B cell (primary cell): ENCODE measurements at regions of chr19 and their contacts with region 1.

Region 1: DNA sequence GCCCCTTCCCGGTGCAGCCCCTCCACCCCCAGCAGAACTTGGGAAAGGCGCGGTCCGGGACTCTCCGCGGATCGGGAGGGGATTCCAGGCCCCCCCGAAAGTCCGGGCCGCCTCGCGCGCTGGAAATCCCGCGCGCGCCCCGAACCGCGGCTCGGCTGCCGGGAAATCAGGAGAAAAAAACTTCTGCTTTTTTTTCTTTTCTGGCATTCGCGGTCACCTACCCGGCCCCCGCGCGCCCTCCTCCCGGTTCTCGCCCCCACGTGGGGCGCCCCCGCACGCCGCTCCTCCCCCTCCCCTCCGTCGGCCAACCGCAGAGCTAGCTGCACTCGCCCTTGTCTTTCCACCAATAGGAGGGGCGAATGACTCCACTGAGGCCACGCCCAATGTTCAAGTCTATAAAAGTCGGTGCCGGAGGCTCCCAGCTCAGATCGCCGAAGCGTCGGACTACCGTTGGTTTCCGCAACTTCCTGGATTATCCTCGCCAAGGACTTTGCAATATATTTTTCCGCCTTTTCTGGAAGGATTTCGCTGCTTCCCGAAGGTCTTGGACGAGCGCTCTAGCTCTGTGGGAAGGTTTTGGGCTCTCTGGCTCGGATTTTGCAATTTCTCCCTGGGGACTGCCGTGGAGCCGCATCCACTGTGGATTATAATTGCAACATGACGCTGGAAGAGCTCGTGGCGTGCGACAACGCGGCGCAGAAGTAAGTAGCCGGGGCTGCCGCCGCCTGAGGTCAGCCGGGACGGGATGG is at the start of gene GADD45B:
- DNase-seq: peak; percentile 99
- ATAC-seq: peak; percentile 71
- H3K4me3 ChIP-seq: peak within 1 kb of the TSS; percentile 94 to 100 (median 100)
- H3K4me3 Mint-ChIP-seq: peak within 1 kb of the TSS; percentile 93
- H3K27ac ChIP-seq: peak within 1 kb of the TSS; percentile 72 to 74
- H3K27ac Mint-ChIP-seq: peak within 1 kb of the TSS; percentile 93
- H3K4me1 ChIP-seq: peaks cover 30 to 47% of the 10 kb centered on the region in 2 donors
- H3K4me1 Mint-ChIP-seq: peaks cover 34% of the 10 kb centered on the region
- H3K27me3 ChIP-seq: no peaks in the 10 kb centered on the region
- H3K27me3 Mint-ChIP-seq: no peaks in the 10 kb centered on the region
- CTCF ChIP-seq: no peak
- total RNA-seq, gene GADD45B: 166 and 167 TPM in 2 replicates

Region 2: GRCh38 chr19:2151339-2152229 is 324.3 kb before region 1 on chr19 and contains the start of gene AP3D1:
- CTCF ChIA-PET with region 1: interaction called, 3 read pairs
- POLR2A ChIA-PET with region 1: no interaction called
- intact Hi-C with region 1: loop called (anchors 10 kb)
- DNase-seq: peak; percentile 100
- ATAC-seq: peak; percentile 91
- H3K4me3 ChIP-seq: peak within 1 kb of the TSS; percentile 64 to 95 (median 82)
- H3K4me3 Mint-ChIP-seq: peak within 1 kb of the TSS; percentile 83
- H3K27ac ChIP-seq: peak within 1 kb of the TSS; percentile 18 to 90
- H3K27ac Mint-ChIP-seq: peak within 1 kb of the TSS; percentile 90
- H3K4me1 ChIP-seq: peaks cover 18 to 36% of the 10 kb centered on the region in 2 donors
- H3K4me1 Mint-ChIP-seq: peaks cover 37% of the 10 kb centered on the region
- H3K27me3 ChIP-seq: no peaks in the 10 kb centered on the region
- H3K27me3 Mint-ChIP-seq: no peaks in the 10 kb centered on the region
- CTCF ChIP-seq: no peak
- total RNA-seq, gene AP3D1: 96.4 and 108 TPM in 2 replicates

Region 3: DNA sequence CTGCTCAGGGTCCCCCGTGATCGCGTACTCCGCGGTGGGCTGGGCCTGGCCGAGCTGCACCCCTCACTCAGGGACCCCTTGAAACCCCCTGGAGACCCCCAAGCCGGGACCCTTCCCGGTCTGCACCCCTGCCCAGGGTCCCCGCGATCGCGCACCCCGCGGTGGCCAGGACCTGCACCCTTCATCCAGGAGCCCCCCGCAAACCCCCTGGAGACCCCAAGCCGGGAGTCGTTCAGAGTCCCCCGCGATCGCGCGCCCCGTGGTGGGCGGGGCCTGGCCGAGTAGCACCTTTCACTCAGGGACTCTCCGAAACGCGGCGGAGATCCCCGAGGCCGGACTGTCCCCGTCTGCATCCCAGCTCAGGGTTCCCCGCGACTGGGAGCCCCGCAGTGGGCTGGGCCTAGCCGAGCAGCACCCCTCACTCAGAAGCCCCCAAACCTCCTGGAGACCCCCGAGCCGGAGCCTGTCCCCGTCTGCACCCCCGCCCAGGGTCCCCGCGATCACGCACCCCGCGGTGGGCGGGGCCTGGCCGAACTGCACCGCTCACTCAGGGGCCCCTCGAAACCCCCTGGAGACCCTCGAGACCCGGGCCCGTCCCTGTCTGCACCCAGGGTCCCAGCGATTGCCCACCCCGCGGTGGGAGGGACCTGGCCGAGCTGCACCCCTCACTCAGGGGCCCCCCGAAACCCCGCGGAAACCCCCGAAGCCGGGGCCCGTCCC is 19.9 kb before region 1 on chr19:
- CTCF ChIA-PET with region 1: interaction called, 4 read pairs
- POLR2A ChIA-PET with region 1: interaction called, 12 read pairs
- intact Hi-C with region 1: no loop called
- DNase-seq: peak; percentile 73
- ATAC-seq: peak; percentile 34
- H3K4me3 ChIP-seq: peak overlapping the region; percentile 48 to 81 (median 76)
- H3K4me3 Mint-ChIP-seq: peak overlapping the region; percentile 84
- H3K27ac ChIP-seq: peak overlapping the region in 1 of 2 donors; percentile 73
- H3K27ac Mint-ChIP-seq: peak overlapping the region; percentile 63
- H3K4me1 ChIP-seq: peaks cover 7 to 26% of the 10 kb centered on the region in 2 donors
- H3K4me1 Mint-ChIP-seq: peaks cover 24% of the 10 kb centered on the region
- H3K27me3 ChIP-seq: no peaks in the 10 kb centered on the region
- H3K27me3 Mint-ChIP-seq: peaks cover under 1% of the 10 kb centered on the region
- CTCF ChIP-seq: no peak

Region 4: GRCh38 chr19:2543463-2544442 is 67.9 kb after region 1 on chr19:
- CTCF ChIA-PET with region 1: interaction called, 18 read pairs
- POLR2A ChIA-PET with region 1: interaction called, 18 read pairs
- intact Hi-C with region 1: no loop called
- DNase-seq: peak; percentile 50
- ATAC-seq: peak; percentile 74
- H3K4me3 ChIP-seq: peak overlapping the region in 2 of 5 experiments; percentile 7 to 8
- H3K4me3 Mint-ChIP-seq: peak overlapping the region; percentile 65
- H3K27ac ChIP-seq: no peak overlapping the region
- H3K27ac Mint-ChIP-seq: peak overlapping the region; percentile 57
- H3K4me1 ChIP-seq: peaks cover 19 to 24% of the 10 kb centered on the region in 2 donors
- H3K4me1 Mint-ChIP-seq: peaks cover 32% of the 10 kb centered on the region
- H3K27me3 ChIP-seq: no peaks in the 10 kb centered on the region
- H3K27me3 Mint-ChIP-seq: no peaks in the 10 kb centered on the region
- CTCF ChIP-seq: no peak

Region 5: GRCh38 chr19:2578901-2579677 is 103.2 kb after region 1 on chr19:
- CTCF ChIA-PET with region 1: interaction called, 25 read pairs
- POLR2A ChIA-PET with region 1: no interaction called
- intact Hi-C with region 1: no loop called
- DNase-seq: peak; percentile 39
- ATAC-seq: no peak
- H3K4me3 ChIP-seq: no peak overlapping the region
- H3K4me3 Mint-ChIP-seq: peak overlapping the region; percentile 13
- H3K27ac ChIP-seq: no peak overlapping the region
- H3K27ac Mint-ChIP-seq: no peak overlapping the region
- H3K4me1 ChIP-seq: peaks cover 13 to 15% of the 10 kb centered on the region in 2 donors
- H3K4me1 Mint-ChIP-seq: peaks cover 19% of the 10 kb centered on the region
- H3K27me3 ChIP-seq: no peaks in the 10 kb centered on the region
- H3K27me3 Mint-ChIP-seq: no peaks in the 10 kb centered on the region
- CTCF ChIP-seq: peak; percentile 29

Region 6: GRCh38 chr19:2618611-2619010 is 142.7 kb after region 1 on chr19:
- CTCF ChIA-PET with region 1: interaction called, 134 read pairs
- POLR2A ChIA-PET with region 1: interaction called, 77 read pairs
- intact Hi-C with region 1: no loop called
- DNase-seq: peak; percentile 83
- ATAC-seq: peak; percentile 29
- H3K4me3 ChIP-seq: peak overlapping the region in 3 of 5 experiments; percentile 25 to 47 (median 29)
- H3K4me3 Mint-ChIP-seq: peak overlapping the region; percentile 79
- H3K27ac ChIP-seq: peak overlapping the region; percentile 78 to 79
- H3K27ac Mint-ChIP-seq: peak overlapping the region; percentile 95
- H3K4me1 ChIP-seq: peaks cover 83 to 93% of the 10 kb centered on the region in 2 donors
- H3K4me1 Mint-ChIP-seq: peaks cover 82% of the 10 kb centered on the region
- H3K27me3 ChIP-seq: no peaks in the 10 kb centered on the region
- H3K27me3 Mint-ChIP-seq: no peaks in the 10 kb centered on the region
- CTCF ChIP-seq: no peak

Region 7: GRCh38 chr19:2648528-2648937 is 172.7 kb after region 1 on chr19:
- CTCF ChIA-PET with region 1: interaction called, 13 read pairs
- POLR2A ChIA-PET with region 1: interaction called, 6 read pairs
- intact Hi-C with region 1: no loop called
- DNase-seq: peak; percentile 87
- ATAC-seq: peak; percentile 81
- H3K4me3 ChIP-seq: no peak overlapping the region
- H3K4me3 Mint-ChIP-seq: no peak overlapping the region
- H3K27ac ChIP-seq: no peak overlapping the region
- H3K27ac Mint-ChIP-seq: peak overlapping the region; percentile 50
- H3K4me1 ChIP-seq: peaks cover 8 to 38% of the 10 kb centered on the region in 2 donors
- H3K4me1 Mint-ChIP-seq: peaks cover 47% of the 10 kb centered on the region
- H3K27me3 ChIP-seq: no peaks in the 10 kb centered on the region
- H3K27me3 Mint-ChIP-seq: no peaks in the 10 kb centered on the region
- CTCF ChIP-seq: peak; percentile 93

Region 8: GRCh38 chr19:4425537-4425936 is 1949.7 kb after region 1 on chr19:
- CTCF ChIA-PET with region 1: no interaction called
- POLR2A ChIA-PET with region 1: no interaction called
- intact Hi-C with region 1: no loop called
- DNase-seq: no peak
- ATAC-seq: no peak
- H3K4me3 ChIP-seq: no peak overlapping the region
- H3K4me3 Mint-ChIP-seq: no peak overlapping the region
- H3K27ac ChIP-seq: no peak overlapping the region
- H3K27ac Mint-ChIP-seq: no peak overlapping the region
- H3K4me1 ChIP-seq: peaks cover 0 to 12% of the 10 kb centered on the region in 2 donors
- H3K4me1 Mint-ChIP-seq: peaks cover 7% of the 10 kb centered on the region
- H3K27me3 ChIP-seq: no peaks in the 10 kb centered on the region
- H3K27me3 Mint-ChIP-seq: no peaks in the 10 kb centered on the region
- CTCF ChIP-seq: no peak